Ovary (tissue), 10 donors: ENCODE measurements at regions of chr3 and their contacts with region 1.

Region 1: DNA sequence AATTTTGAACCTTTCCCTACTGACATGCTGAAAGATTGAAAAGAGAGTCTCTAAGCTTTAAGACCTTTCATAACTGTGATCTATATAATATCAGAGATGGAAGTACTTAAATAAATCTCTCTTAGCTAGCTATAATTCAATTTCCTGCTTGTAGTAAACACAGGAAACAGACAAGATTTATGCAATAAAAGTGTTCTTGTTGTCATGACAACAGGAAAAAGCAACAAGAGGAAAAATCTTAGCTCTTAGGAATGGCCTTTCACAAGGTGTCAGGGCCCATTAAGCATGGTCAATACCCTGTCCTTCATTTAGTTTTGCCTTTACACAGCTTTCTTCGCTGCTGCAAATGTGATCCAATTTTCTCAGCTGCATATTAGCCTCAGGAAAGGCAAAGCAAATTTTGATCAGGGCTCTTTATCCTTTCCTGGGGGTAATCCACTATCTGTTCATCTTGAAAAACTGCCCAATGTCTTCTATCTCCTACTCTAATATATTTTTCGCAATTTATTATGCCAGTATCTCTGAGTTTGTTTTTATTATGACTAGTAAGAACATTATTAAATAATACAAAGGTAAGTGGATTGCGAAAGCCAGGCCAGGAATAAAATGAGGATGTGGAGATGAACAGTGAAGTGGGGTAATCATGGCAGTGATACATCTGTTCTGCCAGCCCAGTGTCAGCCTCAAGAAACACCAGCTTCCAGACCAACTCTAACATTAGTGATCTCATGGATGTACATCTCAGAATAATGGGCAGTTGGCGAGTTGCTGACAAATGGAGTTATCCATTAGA is 28.7 kb downstream of the SIDT1 start:
- DNase-seq: no peak
- H3K4me3 ChIP-seq: no peak overlapping the region
- H3K27ac ChIP-seq: no peak overlapping the region
- H3K4me1 ChIP-seq: no peaks in the 10 kb centered on the region
- H3K27me3 ChIP-seq: no peaks in the 10 kb centered on the region
- CTCF ChIP-seq: no peak
- EP300 ChIP-seq: no peak
- POLR2A ChIP-seq: no peak

Region 2: DNA sequence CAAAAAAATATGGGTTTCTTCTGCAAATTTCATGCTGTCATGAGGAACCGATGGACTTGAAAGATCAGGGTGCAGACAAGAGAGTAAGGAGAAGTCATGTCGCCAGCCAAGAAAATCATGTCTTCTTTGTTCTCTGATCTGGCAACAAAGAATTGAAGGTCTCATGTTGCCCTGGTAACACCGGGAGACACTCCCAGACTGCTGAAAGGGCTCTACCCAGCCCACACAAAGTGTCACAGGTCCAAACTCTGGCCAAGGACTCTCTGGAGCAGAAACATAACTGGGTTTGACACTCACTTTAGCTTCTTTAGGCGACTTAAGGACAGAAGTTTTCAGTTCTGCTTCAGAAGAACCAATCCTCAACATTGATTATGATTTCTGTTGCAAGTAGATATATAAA is 14.2 kb after region 1 on chr3:
- intact Hi-C with region 1: loop called in 1 of 4 experiments (anchors 2 kb)
- DNase-seq: no peak
- H3K4me3 ChIP-seq: no peak overlapping the region
- H3K27ac ChIP-seq: no peak overlapping the region
- H3K4me1 ChIP-seq: no peaks in the 10 kb centered on the region
- H3K27me3 ChIP-seq: no peaks in the 10 kb centered on the region
- CTCF ChIP-seq: no peak
- EP300 ChIP-seq: no peak
- POLR2A ChIP-seq: no peak

Region 3: DNA sequence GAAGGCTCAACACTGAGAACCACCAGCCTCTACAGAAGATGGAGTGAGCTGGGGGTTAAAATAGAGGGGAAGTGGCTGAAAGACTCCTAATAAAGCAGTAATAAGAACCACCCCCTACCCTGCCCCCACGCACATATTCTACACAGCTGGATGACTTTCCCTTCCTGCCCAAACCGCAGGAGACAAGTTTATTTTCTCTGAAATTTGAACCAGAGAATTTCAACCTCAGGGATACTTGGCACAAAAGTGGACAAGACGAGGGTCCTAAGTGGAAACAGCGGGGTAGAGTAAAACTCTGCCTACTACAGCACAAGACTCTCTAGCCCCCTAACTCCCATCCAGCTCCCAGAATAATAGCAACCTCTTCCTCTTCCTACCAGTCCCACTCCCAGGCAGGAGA is 107.0 kb after region 1 on chr3:
- intact Hi-C with region 1: no loop called
- DNase-seq: no peak
- H3K4me3 ChIP-seq: no peak overlapping the region
- H3K27ac ChIP-seq: no peak overlapping the region
- H3K4me1 ChIP-seq: no peaks in the 10 kb centered on the region
- H3K27me3 ChIP-seq: no peaks in the 10 kb centered on the region
- CTCF ChIP-seq: no peak
- EP300 ChIP-seq: no peak
- POLR2A ChIP-seq: no peak